ENCODE measurements at regions of chr15 and their contacts with region 1.

Region 1: GRCh38 chr15:78402061-78402610 is 35.9 kb upstream of the IREB2 start:
- DNase-seq: peak in 1 of 2 donors; percentile 6
- H3K4me3 ChIP-seq: no peak overlapping the region
- CTCF ChIP-seq: no peak
- POLR2A ChIP-seq: no peak

Region 2: DNA sequence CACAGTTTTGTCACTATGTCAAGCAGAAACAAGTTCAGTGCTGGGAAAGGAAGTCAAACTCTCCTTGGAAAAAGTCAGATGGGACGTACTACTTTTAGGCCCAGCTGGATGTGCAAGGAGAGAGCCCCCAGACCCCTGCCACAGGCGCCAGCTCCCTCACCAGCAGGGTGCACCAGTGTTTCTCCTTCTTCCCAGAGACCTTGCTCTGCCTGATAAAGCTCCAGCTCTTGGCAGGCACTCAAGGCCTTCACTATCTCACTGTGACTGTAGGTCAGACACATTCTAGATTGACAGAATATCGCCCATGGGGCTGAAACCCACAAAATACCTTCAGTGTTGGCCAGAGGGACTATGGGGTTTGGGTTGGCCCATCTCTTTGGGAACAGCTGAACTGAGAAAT is 293.7 kb after region 1 on chr15:
- intact Hi-C with region 1: loop called (anchors 10 kb)
- DNase-seq: peak in 1 of 2 donors; percentile 61
- H3K4me3 ChIP-seq: no peak overlapping the region
- CTCF ChIP-seq: no peak
- POLR2A ChIP-seq: no peak